IMR-90 (cell line): ENCODE measurements at regions of chr14 and their contacts with region 1.

Region 1: GRCh38 chr14:102694530-102695166 is 82.6 kb upstream of the TRAF3 start:
- DNase-seq: peak; percentile 73
- ATAC-seq: peak; percentile 86
- H3K4me3 ChIP-seq: no peak overlapping the region
- H3K27ac ChIP-seq: no peak overlapping the region
- H3K4me1 ChIP-seq: no peaks in the 10 kb centered on the region; the same call in 1 of the 2 replicates
- H3K27me3 ChIP-seq: no peaks in the 10 kb centered on the region
- CTCF ChIP-seq: peak; percentile 76
- POLR2A ChIP-seq: no peak
- RAD21 ChIP-seq: peak; percentile 75

Region 2: GRCh38 chr14:102524466-102525218 is 170.0 kb before region 1 on chr14:
- CTCF ChIA-PET with region 1: no interaction called
- POLR2A ChIA-PET with region 1: no interaction called
- dilution Hi-C with region 1: no loop called
- in situ Hi-C with region 1: no loop called
- intact Hi-C with region 1: loop called (anchors 5 kb)
- DNase-seq: peak; percentile 98
- ATAC-seq: peak; percentile 99
- H3K4me3 ChIP-seq: peak overlapping the region; percentile 62
- H3K27ac ChIP-seq: peak overlapping the region; percentile 62
- H3K4me1 ChIP-seq: peaks cover 6% of the 10 kb centered on the region; the same call in 1 of the 2 replicates
- H3K27me3 ChIP-seq: no peaks in the 10 kb centered on the region
- CTCF ChIP-seq: peak; percentile 99
- POLR2A ChIP-seq: peak; percentile 33; the same call in 1 of the 2 replicates
- RAD21 ChIP-seq: peak; percentile 88

Region 3: DNA sequence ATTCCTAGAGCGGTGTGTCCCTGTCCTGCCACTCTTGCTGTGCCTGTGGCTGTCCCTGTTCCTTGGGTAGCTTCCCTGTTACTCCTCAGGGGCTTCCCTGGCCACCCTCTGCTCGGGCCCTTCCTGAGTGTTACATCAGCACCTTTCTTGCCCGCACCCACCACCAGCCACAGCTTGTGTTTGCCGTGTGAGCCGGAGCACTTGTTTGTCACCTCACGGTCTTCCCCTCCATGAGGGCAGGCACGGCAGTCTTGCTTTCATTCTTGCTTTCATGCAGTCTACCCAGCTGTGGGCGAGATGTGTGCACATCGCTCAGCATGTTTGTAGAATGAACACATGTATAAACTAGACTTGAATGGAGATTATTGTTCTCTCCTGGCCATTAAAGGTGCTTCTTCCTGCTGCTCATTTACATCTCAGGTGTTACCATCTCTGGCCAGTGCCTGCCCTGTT is 124.6 kb after region 1 on chr14:
- CTCF ChIA-PET with region 1: no interaction called
- POLR2A ChIA-PET with region 1: no interaction called
- dilution Hi-C with region 1: no loop called
- in situ Hi-C with region 1: no loop called
- intact Hi-C with region 1: no loop called
- DNase-seq: no peak
- ATAC-seq: no peak
- H3K4me3 ChIP-seq: no peak overlapping the region
- H3K27ac ChIP-seq: no peak overlapping the region
- H3K4me1 ChIP-seq: peaks cover 5% of the 10 kb centered on the region; the same call in 1 of the 2 replicates
- H3K27me3 ChIP-seq: no peaks in the 10 kb centered on the region
- CTCF ChIP-seq: no peak
- POLR2A ChIP-seq: no peak
- RAD21 ChIP-seq: no peak

Region 4: DNA sequence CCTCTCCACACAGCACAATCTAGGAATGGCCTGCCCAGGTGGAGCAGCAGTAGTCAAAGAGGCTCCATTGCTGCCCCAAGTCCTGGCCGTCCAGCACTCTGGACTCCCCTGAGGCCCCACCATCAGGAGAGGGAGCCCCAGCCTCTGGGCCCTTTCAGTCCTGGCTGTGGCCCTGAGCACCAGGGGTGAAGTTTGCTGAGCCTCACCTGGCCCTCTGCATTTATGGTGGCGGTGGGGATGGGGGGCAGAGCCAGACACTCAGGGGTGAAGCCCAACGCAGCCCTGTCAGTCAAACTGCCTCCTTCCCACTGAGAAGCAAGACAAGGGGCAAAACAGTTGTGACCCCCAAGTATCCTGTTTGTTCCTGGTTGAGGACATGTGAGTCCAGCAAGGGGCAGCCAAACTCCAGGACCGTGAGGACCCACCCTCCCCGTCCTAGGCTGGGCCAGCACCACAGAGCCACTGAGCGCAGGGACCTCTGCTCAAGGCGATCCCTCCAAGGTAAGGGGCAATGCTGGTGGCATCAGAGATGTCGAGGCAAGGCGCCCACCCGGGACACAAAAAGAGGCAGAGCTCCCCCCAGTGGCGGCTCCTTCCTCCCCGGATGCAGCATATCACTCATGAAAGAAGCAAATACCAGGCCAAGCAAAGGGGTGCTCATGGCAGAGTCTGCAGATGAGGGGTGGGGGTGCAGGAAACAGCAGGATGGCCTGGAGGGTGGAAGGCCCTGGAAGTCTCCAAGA is 223.0 kb after region 1 on chr14:
- CTCF ChIA-PET with region 1: no interaction called
- POLR2A ChIA-PET with region 1: no interaction called
- dilution Hi-C with region 1: no loop called
- in situ Hi-C with region 1: loop called (anchors 10 kb)
- intact Hi-C with region 1: loop called (anchors 1 kb)
- DNase-seq: peak; percentile 24
- ATAC-seq: peak; percentile 74
- H3K4me3 ChIP-seq: no peak overlapping the region
- H3K27ac ChIP-seq: no peak overlapping the region
- H3K4me1 ChIP-seq: no peaks in the 10 kb centered on the region
- H3K27me3 ChIP-seq: peaks cover 9% of the 10 kb centered on the region
- CTCF ChIP-seq: peak; percentile 72
- POLR2A ChIP-seq: no peak
- RAD21 ChIP-seq: peak; percentile 74

Region 5: GRCh38 chr14:103057365-103058096 is 362.9 kb after region 1 on chr14 and contains the start of gene CDC42BPB:
- CTCF ChIA-PET with region 1: no interaction called
- POLR2A ChIA-PET with region 1: no interaction called
- dilution Hi-C with region 1: no loop called
- in situ Hi-C with region 1: no loop called
- intact Hi-C with region 1: loop called (anchors 10 kb)
- DNase-seq: peak; percentile 90
- ATAC-seq: peak; percentile 95
- H3K4me3 ChIP-seq: peak within 1 kb of the TSS; percentile 100
- H3K27ac ChIP-seq: peak within 1 kb of the TSS; percentile 97
- H3K4me1 ChIP-seq: peaks cover 10% of the 10 kb centered on the region
- H3K27me3 ChIP-seq: no peaks in the 10 kb centered on the region
- CTCF ChIP-seq: no peak
- POLR2A ChIP-seq: no peak
- RAD21 ChIP-seq: no peak
- total RNA-seq, gene CDC42BPB: 48.0 and 49.1 TPM in 2 replicates